ENCODE measurements at regions of chr11 and their contacts with region 1.

Region 1: GRCh38 chr11:132858223-132858622 is 674.1 kb downstream of the OPCML start:
- DNase-seq: no peak
- H3K4me3 ChIP-seq: no peak overlapping the region
- H3K27ac ChIP-seq: no peak overlapping the region
- H3K4me1 ChIP-seq: no peaks in the 10 kb centered on the region
- H3K27me3 ChIP-seq: no peaks in the 10 kb centered on the region
- CTCF ChIP-seq: peak in 2 of 6 experiments; percentile 47 to 61
- POLR2A ChIP-seq: no peak

Region 2: GRCh38 chr11:132685174-132685611 is 173.0 kb before region 1 on chr11:
- intact Hi-C with region 1: no loop called
- DNase-seq: no peak
- H3K4me3 ChIP-seq: no peak overlapping the region
- H3K27ac ChIP-seq: no peak overlapping the region
- H3K4me1 ChIP-seq: no peaks in the 10 kb centered on the region
- H3K27me3 ChIP-seq: no peaks in the 10 kb centered on the region
- CTCF ChIP-seq: no peak
- POLR2A ChIP-seq: no peak

Region 3: GRCh38 chr11:132941024-132941646 is 82.9 kb after region 1 on chr11:
- intact Hi-C with region 1: loop called (anchors 10 kb)
- DNase-seq: no peak
- H3K4me3 ChIP-seq: no peak overlapping the region
- H3K27ac ChIP-seq: no peak overlapping the region
- H3K4me1 ChIP-seq: peaks cover 4 to 18% (median 6%) of the 10 kb centered on the region in 3 donors
- H3K27me3 ChIP-seq: peaks cover 2 to 49% (median 4%) of the 10 kb centered on the region in 4 donors
- CTCF ChIP-seq: peak; percentile 55 to 88 (median 70)
- POLR2A ChIP-seq: no peak

Measured in esophagus squamous epithelium (tissue), 5 donors.